Activated T-helper 1 cell treated with anti-CD3 and anti-CD28 coated beads, Interleukin-12 subunit alpha, Interleukin-12 subunit beta, Interleukin-2, Interleukin-4 antibody, amounts not matched to agents 30 ng/mL and 10 ng/mL and 1 ng/mL, durations not matched to agents 14 hours and 24 hours and 36 hours (primary cell): ENCODE measurements at regions of chr2 and their contacts with region 1.

Region 1: GRCh38 chr2:144256996-144257707 is 262.8 kb downstream of the ZEB2 start:
- DNase-seq: no peak
- H3K4me3 Mint-ChIP-seq: no peak overlapping the region
- H3K27ac Mint-ChIP-seq: peak overlapping the region; percentile 71
- H3K4me1 Mint-ChIP-seq: peaks cover 41% of the 10 kb centered on the region
- H3K27me3 Mint-ChIP-seq: no peaks in the 10 kb centered on the region

Region 2: GRCh38 chr2:143988082-143988481 is 269.1 kb before region 1 on chr2:
- intact Hi-C with region 1: no loop called
- DNase-seq: no peak
- H3K4me3 Mint-ChIP-seq: no peak overlapping the region
- H3K27ac Mint-ChIP-seq: no peak overlapping the region
- H3K4me1 Mint-ChIP-seq: no peaks in the 10 kb centered on the region
- H3K27me3 Mint-ChIP-seq: no peaks in the 10 kb centered on the region

Region 3: DNA sequence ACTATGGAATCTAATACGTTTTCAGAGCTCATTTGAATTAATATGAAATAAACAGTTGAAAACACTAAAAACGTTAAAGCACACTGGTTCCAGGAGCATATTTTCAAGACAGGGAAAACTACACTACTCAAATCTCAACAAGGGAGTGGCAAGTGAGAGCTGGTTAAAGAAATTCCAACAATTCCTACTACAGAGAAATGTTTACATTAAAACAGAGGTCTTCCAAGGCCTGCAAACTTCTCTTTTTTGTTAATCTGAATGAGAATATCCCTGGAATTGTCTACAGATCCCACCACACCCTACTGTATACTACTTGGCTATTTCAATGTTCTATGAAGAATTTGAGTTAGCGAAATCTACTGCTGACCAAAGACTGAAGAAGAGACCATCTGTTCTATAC is 31.3 kb after region 1 on chr2:
- intact Hi-C with region 1: no loop called
- DNase-seq: no peak
- H3K4me3 Mint-ChIP-seq: no peak overlapping the region
- H3K27ac Mint-ChIP-seq: no peak overlapping the region
- H3K4me1 Mint-ChIP-seq: no peaks in the 10 kb centered on the region
- H3K27me3 Mint-ChIP-seq: no peaks in the 10 kb centered on the region

Region 4: GRCh38 chr2:144382849-144383248 is 125.7 kb after region 1 on chr2:
- intact Hi-C with region 1: loop called (anchors 5 kb)
- DNase-seq: peak; percentile 13
- H3K4me3 Mint-ChIP-seq: no peak overlapping the region
- H3K27ac Mint-ChIP-seq: peak overlapping the region; percentile 32
- H3K4me1 Mint-ChIP-seq: peaks cover 44% of the 10 kb centered on the region
- H3K27me3 Mint-ChIP-seq: peaks cover 8% of the 10 kb centered on the region